ENCODE measurements at regions of chr5 and their contacts with region 1.

Region 1: DNA sequence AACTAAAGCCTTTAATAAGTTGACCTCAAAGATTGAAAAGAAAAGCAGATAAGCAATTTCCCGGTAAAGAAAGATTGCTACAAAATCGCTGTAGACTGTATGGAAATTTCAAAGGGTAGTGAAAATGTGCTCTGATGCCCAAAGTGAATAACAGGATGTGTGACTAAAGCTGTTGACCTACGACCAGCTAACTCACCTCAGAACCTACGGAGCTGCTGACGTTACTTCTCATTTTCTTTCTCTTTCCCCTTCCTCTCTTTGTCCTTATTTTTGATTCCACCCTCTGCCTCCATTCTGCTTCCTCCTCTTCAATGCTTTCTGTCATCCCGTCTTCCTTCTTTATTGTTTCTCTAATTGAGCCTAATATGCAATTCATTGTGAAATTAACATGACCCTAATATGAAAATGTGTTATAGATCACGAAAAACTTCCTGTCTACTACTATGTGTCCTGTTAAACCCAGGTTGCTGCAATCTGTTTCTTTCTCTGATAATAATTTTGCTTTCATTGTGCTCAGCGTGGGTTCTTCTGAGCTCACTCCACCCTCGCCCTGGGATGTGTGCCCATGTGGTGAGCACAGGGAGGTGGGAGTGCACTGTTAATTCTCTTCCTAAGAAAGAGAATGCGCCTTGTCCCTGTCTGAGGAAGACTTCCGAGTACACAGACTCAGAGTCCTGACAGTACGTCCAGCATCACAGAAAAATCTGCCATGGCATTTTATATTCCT is 103.0 kb downstream of the PDE4D start:
- DNase-seq: no peak
- H3K4me3 Mint-ChIP-seq: peak overlapping the region; percentile 13
- H3K27ac Mint-ChIP-seq: peak overlapping the region; percentile 76
- H3K4me1 Mint-ChIP-seq: peaks cover 20% of the 10 kb centered on the region
- H3K27me3 Mint-ChIP-seq: peaks cover 7% of the 10 kb centered on the region

Region 2: DNA sequence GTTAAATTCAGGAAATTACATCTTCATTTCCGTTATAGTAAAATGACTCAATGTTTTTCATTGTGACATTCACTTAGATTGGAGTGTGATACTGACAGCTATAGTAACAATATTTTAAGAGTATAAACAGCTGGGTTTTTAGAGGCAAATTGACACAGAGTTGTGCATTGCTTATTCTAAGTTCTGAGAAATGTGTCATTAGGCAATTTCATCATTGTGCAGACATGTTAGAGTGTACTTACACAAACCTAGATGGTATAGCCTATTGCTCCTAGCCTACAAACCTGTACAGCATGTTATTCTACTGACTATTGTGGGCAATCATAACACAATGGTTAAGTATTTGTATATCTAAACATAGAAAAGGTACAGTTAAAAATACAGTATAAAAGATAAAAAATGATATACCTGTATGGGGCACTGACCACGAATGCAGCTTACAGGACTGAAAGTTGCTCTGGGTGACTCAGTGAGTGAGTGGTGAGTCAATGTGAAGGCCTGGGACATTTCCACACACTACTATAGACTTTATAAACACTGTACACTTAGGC is 29.7 kb before region 1 on chr5:
- intact Hi-C with region 1: loop called (anchors 2 kb)
- DNase-seq: no peak
- H3K4me3 Mint-ChIP-seq: no peak overlapping the region
- H3K27ac Mint-ChIP-seq: no peak overlapping the region
- H3K4me1 Mint-ChIP-seq: peaks cover 5% of the 10 kb centered on the region
- H3K27me3 Mint-ChIP-seq: peaks cover 3% of the 10 kb centered on the region

Measured in activated T-helper 1 cell treated with anti-CD3 and anti-CD28 coated beads, Interleukin-12 subunit alpha, Interleukin-12 subunit beta, Interleukin-2, Interleukin-4 antibody, amounts not matched to agents 30 ng/mL and 10 ng/mL and 1 ng/mL, durations not matched to agents 14 hours and 24 hours and 36 hours (primary cell).